Right ventricle myocardium inferior (tissue), 1 donor: ENCODE measurements at regions of chr7 and their contacts with region 1.

Region 1: GRCh38 chr7:105268511-105269392 is 120.0 kb downstream of the SRPK2 start:
- DNase-seq: no peak
- ATAC-seq: peak; percentile 91

Region 2: GRCh38 chr7:105126436-105126975 is 142.2 kb before region 1 on chr7:
- intact Hi-C with region 1: no loop called
- DNase-seq: no peak
- ATAC-seq: peak; percentile 21

Region 3: GRCh38 chr7:105141068-105141467 is 127.7 kb before region 1 on chr7:
- intact Hi-C with region 1: no loop called
- DNase-seq: no peak
- ATAC-seq: no peak

Region 4: GRCh38 chr7:105387621-105388372 is 119.0 kb after region 1 on chr7:
- intact Hi-C with region 1: loop called (anchors 10 kb)
- DNase-seq: peak; percentile 86
- ATAC-seq: peak; percentile 63